ENCODE measurements at regions of chr6 and their contacts with region 1.

Region 1: GRCh38 chr6:157045831-157046454 is 268.8 kb downstream of the ARID1B start:
- DNase-seq: no peak
- H3K4me3 ChIP-seq: no peak overlapping the region
- H3K27ac ChIP-seq: no peak overlapping the region
- H3K4me1 ChIP-seq: peaks cover 0 to 7% (median 2%) of the 10 kb centered on the region in 4 experiments; a peak in 3 of 7 replicates
- H3K27me3 ChIP-seq: no peaks in the 10 kb centered on the region
- CTCF ChIP-seq: peak in 1 of 3 experiments; percentile 27; a peak in 1 of 4 replicates
- EP300 ChIP-seq: no peak
- POLR2A ChIP-seq: no peak
- RAD21 ChIP-seq: peak; percentile 46 to 50; a peak in 3 of 4 replicates

Region 2: GRCh38 chr6:156839591-156840001 is 206.3 kb before region 1 on chr6:
- CTCF ChIA-PET with region 1: no interaction called
- POLR2A ChIA-PET with region 1: no interaction called
- DNase-seq: no peak
- H3K4me3 ChIP-seq: no peak overlapping the region
- H3K27ac ChIP-seq: no peak overlapping the region; the same call in 1 of the 2 replicates
- H3K4me1 ChIP-seq: peaks cover 1 to 28% (median 17%) of the 10 kb centered on the region in 4 experiments; a peak in 5 of 7 replicates
- H3K27me3 ChIP-seq: no peaks in the 10 kb centered on the region
- CTCF ChIP-seq: no peak
- EP300 ChIP-seq: no peak
- POLR2A ChIP-seq: no peak
- RAD21 ChIP-seq: no peak

Region 3: GRCh38 chr6:156899532-156900135 is 146.3 kb before region 1 on chr6:
- CTCF ChIA-PET with region 1: interaction called, 11 read pairs
- POLR2A ChIA-PET with region 1: no interaction called
- DNase-seq: no peak
- H3K4me3 ChIP-seq: no peak overlapping the region
- H3K27ac ChIP-seq: no peak overlapping the region
- H3K4me1 ChIP-seq: peaks cover 0 to 7% (median 2%) of the 10 kb centered on the region in 4 experiments; a peak in 1 of 7 replicates
- H3K27me3 ChIP-seq: no peaks in the 10 kb centered on the region
- CTCF ChIP-seq: peak in 2 of 3 experiments; percentile 22 to 25; a peak in 2 of 4 replicates
- EP300 ChIP-seq: no peak
- POLR2A ChIP-seq: no peak
- RAD21 ChIP-seq: peak in 1 of 2 experiments; percentile 34; a peak in 3 of 4 replicates

Region 4: DNA sequence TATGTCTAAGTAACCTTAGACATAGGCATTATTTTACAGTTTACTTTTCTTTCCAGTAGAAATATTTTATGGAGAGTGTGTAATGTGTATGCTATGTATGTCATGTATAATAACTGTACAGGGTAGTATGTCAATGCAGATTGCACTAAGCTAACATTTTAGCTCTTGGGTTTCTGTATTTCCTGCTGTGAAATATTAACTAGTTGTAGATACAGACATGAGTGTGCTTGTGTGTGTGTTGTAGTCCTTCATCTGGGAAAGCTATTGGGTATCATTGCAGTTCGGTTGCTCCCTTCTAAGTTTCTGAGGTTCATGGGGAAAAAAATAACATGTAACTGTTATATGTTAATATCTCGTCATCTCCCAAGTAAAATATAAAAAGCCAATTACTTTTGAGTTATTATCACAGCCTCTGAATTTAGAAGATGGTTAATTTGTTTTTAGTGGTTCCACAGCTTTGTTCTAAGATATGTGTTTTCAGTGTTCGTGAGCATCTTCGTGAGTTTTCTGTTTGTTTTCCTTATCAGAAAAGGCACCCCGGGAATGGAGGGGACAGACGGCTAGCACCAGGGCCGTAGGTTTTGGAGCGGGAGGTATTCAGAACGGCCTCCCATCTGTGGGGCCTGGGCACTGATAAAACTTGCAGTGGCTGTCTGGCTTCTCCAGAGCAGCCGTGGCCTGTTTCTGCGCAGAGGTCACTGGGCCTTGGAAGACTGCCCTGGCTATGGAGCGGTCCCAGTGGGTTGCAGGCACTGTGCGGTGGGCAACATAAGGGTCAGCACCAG is 53.7 kb before region 1 on chr6:
- CTCF ChIA-PET with region 1: no interaction called
- POLR2A ChIA-PET with region 1: no interaction called
- DNase-seq: no peak
- H3K4me3 ChIP-seq: no peak overlapping the region
- H3K27ac ChIP-seq: no peak overlapping the region
- H3K4me1 ChIP-seq: peaks cover 4 to 18% (median 13%) of the 10 kb centered on the region in 4 experiments; a peak in 5 of 7 replicates
- H3K27me3 ChIP-seq: no peaks in the 10 kb centered on the region
- CTCF ChIP-seq: no peak
- EP300 ChIP-seq: no peak
- POLR2A ChIP-seq: no peak
- RAD21 ChIP-seq: no peak

Region 5: DNA sequence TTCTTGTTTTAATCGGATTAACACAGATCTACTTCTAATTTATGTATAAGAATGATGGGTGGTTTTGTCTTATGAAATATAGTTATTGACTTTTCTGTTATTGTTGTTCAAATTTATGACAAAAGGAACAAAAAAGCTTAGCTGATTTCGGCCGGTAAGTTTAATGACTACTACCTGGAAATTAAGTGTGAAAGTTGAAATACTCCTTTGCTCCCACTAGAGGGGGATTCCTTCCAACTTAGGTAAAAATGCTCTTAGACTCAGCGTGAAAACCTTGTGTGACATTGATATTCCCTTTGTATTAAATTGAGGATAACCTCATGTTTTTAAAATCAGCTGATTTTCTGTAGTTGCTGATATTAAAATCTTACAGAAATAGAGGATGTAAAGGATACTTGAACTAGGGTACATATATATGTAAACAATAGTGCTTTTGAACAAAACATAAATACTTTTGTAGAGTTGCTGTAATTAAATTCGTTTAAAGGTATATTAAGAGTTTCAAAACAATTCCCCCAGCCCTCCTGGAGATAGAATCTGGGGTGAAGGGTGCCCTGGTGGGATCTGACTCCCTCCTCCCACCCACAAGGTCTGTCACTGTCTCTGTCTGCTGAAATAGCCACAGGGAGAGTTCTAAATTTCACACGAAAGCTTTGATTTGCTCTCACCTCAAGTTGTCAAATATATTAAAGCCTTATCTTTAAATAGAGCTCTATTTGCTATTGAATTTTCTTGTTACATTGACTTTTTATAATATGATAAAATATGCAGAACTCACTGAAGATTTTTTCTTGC is 11.3 kb before region 1 on chr6:
- CTCF ChIA-PET with region 1: interaction called, 40 read pairs
- POLR2A ChIA-PET with region 1: interaction called, 3 read pairs
- DNase-seq: no peak
- H3K4me3 ChIP-seq: no peak overlapping the region
- H3K27ac ChIP-seq: no peak overlapping the region
- H3K4me1 ChIP-seq: peaks cover 8 to 22% (median 15%) of the 10 kb centered on the region in 4 experiments
- H3K27me3 ChIP-seq: no peaks in the 10 kb centered on the region
- CTCF ChIP-seq: peak in 2 of 3 experiments; percentile 44 to 56; a peak in 2 of 4 replicates
- EP300 ChIP-seq: no peak
- POLR2A ChIP-seq: no peak
- RAD21 ChIP-seq: peak; percentile 63 to 66